Activated CD4-positive, alpha-beta memory T cell treated with anti-CD3 and anti-CD28 coated beads for 36 hours (primary cell): ENCODE measurements at regions of chr1 and their contacts with region 1.

Region 1: DNA sequence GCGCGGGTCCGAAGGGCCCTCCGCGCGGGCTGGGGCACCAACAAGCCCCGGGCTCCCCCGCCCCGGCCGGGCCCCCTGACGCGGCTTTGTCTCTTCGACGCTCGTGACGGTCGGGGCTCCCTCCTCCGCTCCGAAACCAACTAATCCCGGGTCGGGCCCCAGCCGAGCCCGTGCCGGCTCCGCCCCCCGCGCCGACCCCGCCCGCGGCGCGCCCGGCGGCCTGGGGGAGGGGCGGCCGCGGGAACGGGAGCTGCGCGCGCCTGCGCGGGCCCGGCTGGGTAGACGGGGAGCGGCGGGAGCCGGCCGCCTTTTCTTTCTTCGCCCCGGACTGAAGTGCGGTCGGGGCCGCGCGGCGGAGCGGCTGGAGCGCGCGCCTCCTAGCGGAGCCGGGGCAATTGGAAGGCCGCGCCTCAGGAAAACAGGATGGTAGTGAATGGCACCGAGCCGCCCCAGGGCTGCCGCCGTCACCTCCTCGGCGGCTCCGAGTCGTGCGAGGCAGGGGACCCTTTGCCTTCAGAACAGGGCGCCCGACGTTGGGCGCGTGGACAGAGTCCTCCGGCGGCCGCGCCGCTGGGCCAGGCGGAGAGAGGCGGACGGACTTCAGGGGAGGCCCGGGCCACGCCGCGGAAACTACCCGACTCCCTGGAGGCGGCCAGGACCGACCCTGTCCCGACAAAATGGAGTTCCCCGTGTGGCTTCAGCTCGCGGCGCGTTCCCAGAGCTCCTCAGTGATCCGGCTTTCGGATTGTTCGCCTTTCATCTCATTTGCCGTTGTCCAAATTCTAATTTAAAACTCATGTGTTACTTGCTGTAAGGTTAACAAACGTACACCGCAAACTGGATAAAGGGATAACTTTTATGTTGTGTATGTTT is at the start of gene TP53BP2:
- DNase-seq: peak; percentile 88
- H3K4me3 Mint-ChIP-seq: peak within 1 kb of the TSS; percentile 98
- H3K27ac Mint-ChIP-seq: peak within 1 kb of the TSS; percentile 100
- H3K4me1 Mint-ChIP-seq: peaks cover 45% of the 10 kb centered on the region
- H3K27me3 Mint-ChIP-seq: no peaks in the 10 kb centered on the region
- total RNA-seq, gene TP53BP2: 56.0 to 58.7 TPM

Region 2: GRCh38 chr1:223466151-223466550 is 379.9 kb before region 1 on chr1:
- CTCF ChIA-PET with region 1: no interaction called
- POLR2A ChIA-PET with region 1: no interaction called
- intact Hi-C with region 1: no loop called
- DNase-seq: no peak
- H3K4me3 Mint-ChIP-seq: no peak overlapping the region
- H3K27ac Mint-ChIP-seq: no peak overlapping the region
- H3K4me1 Mint-ChIP-seq: no peaks in the 10 kb centered on the region
- H3K27me3 Mint-ChIP-seq: no peaks in the 10 kb centered on the region

Region 3: GRCh38 chr1:223712194-223712849 is 133.7 kb before region 1 on chr1 and contains the start of gene CAPN2:
- CTCF ChIA-PET with region 1: no interaction called
- POLR2A ChIA-PET with region 1: interaction called, 8 read pairs
- intact Hi-C with region 1: loop called (anchors 1 kb)
- DNase-seq: peak; percentile 75
- H3K4me3 Mint-ChIP-seq: peak within 1 kb of the TSS; percentile 85
- H3K27ac Mint-ChIP-seq: peak within 1 kb of the TSS; percentile 80
- H3K4me1 Mint-ChIP-seq: peaks cover 58% of the 10 kb centered on the region
- H3K27me3 Mint-ChIP-seq: no peaks in the 10 kb centered on the region
- total RNA-seq, gene CAPN2: 61.2 to 64.5 TPM

Region 4: DNA sequence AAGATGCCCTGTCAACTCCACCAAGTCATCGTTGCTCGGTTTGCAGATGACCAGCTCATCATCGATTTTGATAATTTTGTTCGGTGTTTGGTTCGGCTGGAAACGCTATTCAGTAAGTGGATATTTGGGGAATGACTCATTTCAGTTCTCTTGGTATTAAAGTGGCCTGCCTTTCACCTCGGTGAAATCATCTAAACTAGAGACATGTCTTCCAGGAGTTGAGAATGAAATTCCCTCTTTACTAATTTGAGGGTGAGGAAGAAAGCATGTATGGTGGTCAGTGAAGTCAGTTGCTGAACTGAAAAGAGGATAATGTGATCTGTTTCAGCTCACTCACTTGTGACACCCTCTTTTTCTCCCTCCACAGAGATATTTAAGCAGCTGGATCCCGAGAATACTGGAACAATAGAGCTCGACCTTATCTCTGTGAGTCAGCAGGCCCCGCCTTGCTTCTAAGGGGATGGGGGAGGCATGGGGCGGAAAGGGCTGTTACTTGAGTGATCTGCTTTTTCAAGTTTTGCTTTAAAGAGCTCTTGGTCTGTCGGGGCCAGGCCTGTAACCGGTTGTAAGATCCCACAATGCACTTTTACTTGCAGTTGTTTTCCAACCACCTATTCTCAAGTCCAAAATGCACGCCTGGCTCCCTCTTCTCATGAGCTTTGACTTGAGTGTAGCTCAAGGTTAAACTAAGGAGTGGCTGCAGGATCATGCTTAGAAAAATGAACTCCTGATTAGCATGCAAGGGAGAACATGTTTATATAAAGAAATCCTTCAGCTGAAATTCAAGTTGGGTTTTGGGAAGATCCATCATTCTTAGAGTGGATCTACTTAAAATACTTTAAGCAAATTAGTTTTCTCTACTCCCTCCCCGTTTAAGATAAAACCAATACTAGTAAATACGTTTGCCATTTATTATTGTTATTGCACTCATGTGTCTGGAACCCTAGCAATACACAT is 74.0 kb before region 1 on chr1:
- CTCF ChIA-PET with region 1: interaction called, 4 read pairs
- POLR2A ChIA-PET with region 1: interaction called, 17 read pairs
- intact Hi-C with region 1: no loop called
- DNase-seq: peak; percentile 35
- H3K4me3 Mint-ChIP-seq: no peak overlapping the region
- H3K27ac Mint-ChIP-seq: peak overlapping the region; percentile 70
- H3K4me1 Mint-ChIP-seq: peaks cover 44% of the 10 kb centered on the region
- H3K27me3 Mint-ChIP-seq: no peaks in the 10 kb centered on the region

Region 5: GRCh38 chr1:223811634-223812415 is 34.2 kb before region 1 on chr1:
- CTCF ChIA-PET with region 1: interaction called, 13 read pairs
- POLR2A ChIA-PET with region 1: interaction called, 10 read pairs
- intact Hi-C with region 1: loop called (anchors 1 kb)
- DNase-seq: no peak
- H3K4me3 Mint-ChIP-seq: no peak overlapping the region
- H3K27ac Mint-ChIP-seq: no peak overlapping the region
- H3K4me1 Mint-ChIP-seq: peaks cover 32% of the 10 kb centered on the region
- H3K27me3 Mint-ChIP-seq: no peaks in the 10 kb centered on the region

Region 6: DNA sequence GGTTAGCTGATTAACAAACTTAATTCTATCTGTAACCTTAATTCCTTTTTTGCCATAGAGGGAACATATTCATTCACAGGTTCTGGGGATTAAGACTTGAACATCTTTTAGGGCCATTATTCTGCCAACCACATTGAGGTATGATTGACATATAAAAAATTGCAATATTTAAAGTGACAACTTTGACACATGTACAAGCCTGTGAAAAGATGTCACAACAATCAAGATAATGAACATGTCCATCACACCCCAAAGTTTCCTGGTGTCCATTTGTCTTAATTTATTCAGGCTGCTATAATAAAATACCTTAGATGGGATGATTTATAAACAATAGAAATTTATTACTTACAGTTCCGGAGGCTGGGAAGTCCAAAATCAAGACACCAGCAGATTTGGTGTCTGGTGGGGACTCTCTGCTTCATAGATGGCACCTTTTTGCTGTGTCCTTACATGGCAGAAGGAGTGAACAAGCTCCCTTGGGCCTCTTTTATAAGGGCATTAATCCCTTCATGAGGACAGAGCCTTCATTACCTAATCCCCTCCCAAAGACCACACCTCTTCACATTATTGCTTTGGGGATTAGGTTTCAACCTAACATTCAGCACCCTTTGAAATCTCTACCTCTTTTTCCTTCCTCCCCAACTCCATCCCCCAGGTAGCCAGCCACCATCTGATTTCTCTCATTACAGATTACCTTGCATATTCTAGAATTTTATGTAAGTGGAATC is 32.7 kb after region 1 on chr1:
- CTCF ChIA-PET with region 1: no interaction called
- POLR2A ChIA-PET with region 1: no interaction called
- intact Hi-C with region 1: no loop called
- DNase-seq: no peak
- H3K4me3 Mint-ChIP-seq: no peak overlapping the region
- H3K27ac Mint-ChIP-seq: no peak overlapping the region
- H3K4me1 Mint-ChIP-seq: no peaks in the 10 kb centered on the region
- H3K27me3 Mint-ChIP-seq: peaks cover 3% of the 10 kb centered on the region